ENCODE measurements at regions of chr20 and their contacts with region 1.

Region 1: GRCh38 chr20:3767427-3768341 is at the start of gene ADISSP:
- DNase-seq: peak; percentile 91
- ATAC-seq: peak; percentile 97
- H3K4me3 ChIP-seq: peak within 1 kb of the TSS; percentile 89
- H3K27ac ChIP-seq: peak within 1 kb of the TSS; percentile 75
- H3K4me1 ChIP-seq: peaks cover 24% of the 10 kb centered on the region
- H3K27me3 ChIP-seq: no peaks in the 10 kb centered on the region
- CTCF ChIP-seq: peak in 2 of 3 experiments; percentile 14 to 23; a peak in 2 of 6 replicates
- EP300 ChIP-seq: no peak
- POLR2A ChIP-seq: peak; percentile 84
- RAD21 ChIP-seq: no peak
- polyA plus RNA-seq, gene ADISSP: 0.80 to 7.6 TPM

Region 2: GRCh38 chr20:3616250-3616649 is 151.4 kb before region 1 on chr20:
- CTCF ChIA-PET with region 1: no interaction called
- POLR2A ChIA-PET with region 1: no interaction called
- RAD21 ChIA-PET with region 1: no interaction called
- SMC1A ChIA-PET with region 1: no interaction called
- in situ Hi-C with region 1: no loop called
- intact Hi-C with region 1: no loop called
- DNase-seq: no peak
- ATAC-seq: no peak
- H3K4me3 ChIP-seq: no peak overlapping the region
- H3K27ac ChIP-seq: no peak overlapping the region
- H3K4me1 ChIP-seq: 0 out of 2 replicates have a peak, but pooled peaks cover 3% of the 10 kb centered on the region
- H3K27me3 ChIP-seq: no peaks in the 10 kb centered on the region
- CTCF ChIP-seq: no peak
- EP300 ChIP-seq: no peak
- POLR2A ChIP-seq: no peak
- RAD21 ChIP-seq: no peak

Region 3: DNA sequence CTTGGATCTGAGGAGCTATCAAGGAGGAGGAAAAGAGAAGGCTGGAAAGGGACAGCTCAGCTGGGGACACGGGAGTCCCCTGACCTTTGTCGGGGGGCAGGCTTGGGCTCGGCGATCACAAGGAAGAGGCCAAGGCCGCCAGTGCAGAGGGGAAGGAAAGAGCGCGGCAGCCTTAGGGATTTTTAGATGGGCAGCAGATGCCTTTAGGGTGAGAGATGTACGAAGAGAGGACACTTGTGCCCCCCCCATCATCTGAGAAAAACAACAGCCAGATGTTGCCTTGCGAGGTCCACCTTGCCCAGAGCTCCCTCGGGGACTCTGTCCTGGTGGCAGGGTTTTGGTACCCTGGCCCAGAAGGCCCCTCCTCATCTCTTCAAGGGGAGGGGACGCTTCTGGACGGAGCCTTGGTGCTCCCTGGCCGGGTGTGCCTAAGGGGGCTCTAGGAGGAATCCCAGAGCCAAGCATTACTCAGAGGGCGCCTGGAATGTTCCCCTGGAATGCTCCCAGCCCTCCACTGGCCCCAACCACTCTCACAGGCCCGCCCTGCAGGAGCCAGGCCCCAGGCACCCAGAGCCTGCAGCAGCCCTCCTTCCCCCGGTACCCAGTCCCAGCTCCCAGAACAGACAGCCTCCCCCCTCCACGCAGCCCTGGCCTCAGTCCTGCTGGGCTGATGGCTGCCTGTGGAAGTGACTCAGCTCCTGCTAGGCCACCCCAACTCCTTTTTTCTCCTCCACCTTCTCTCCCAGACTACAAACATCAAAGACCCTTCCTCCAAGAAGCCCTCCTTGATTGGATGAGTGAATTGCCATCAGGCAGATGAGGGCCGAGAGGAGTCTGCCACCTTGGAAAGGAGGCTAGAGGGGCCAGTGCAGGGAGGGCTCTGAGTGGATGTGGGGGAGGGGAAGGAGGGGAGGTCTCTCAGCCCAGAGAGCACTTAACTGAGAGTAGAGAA is 87.7 kb before region 1 on chr20:
- CTCF ChIA-PET with region 1: interaction called, 24 read pairs
- POLR2A ChIA-PET with region 1: no interaction called
- RAD21 ChIA-PET with region 1: interaction called, 7 read pairs
- SMC1A ChIA-PET with region 1: interaction called, 4 read pairs
- in situ Hi-C with region 1: no loop called
- intact Hi-C with region 1: loop called (anchors 5 kb)
- DNase-seq: no peak
- ATAC-seq: no peak
- H3K4me3 ChIP-seq: no peak overlapping the region
- H3K27ac ChIP-seq: no peak overlapping the region
- H3K4me1 ChIP-seq: no peaks in the 10 kb centered on the region; the same call in 1 of the 2 replicates
- H3K27me3 ChIP-seq: peaks cover 3% of the 10 kb centered on the region in 2 experiments; a peak in 2 of 4 replicates
- CTCF ChIP-seq: no peak
- EP300 ChIP-seq: no peak
- POLR2A ChIP-seq: no peak
- RAD21 ChIP-seq: no peak

Region 4: DNA sequence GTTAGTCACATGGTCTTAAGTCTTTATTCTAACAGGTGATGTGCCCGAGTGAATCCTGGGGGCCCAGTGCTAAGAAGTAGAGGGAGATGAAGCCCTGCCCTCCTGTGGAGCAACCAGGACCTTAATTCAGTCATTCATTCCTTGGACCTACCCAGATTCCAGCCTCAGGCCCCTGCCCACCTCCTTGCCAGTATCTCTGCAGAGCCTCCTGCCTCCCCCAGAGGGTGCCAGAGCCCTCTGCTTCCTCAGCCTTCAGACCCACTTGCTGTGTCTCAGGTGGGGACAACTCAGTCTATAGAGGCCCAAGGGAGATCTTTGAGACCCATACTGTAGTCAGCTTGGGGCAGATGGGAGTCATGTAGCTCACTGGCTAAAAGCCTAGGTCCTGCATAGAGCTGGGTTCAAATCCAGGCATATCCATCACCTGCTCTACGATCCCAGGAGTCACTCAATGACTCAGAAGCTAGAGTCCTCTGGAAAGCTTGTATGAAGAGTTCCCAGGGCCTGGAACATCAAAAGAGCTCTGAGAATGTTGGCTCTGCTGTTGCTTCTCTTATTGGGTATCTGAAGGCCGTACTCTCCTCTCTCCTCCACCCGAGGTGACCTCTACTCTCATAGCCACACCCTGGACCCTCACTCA is 51.4 kb before region 1 on chr20:
- CTCF ChIA-PET with region 1: interaction called, 19 read pairs
- POLR2A ChIA-PET with region 1: no interaction called
- RAD21 ChIA-PET with region 1: interaction called, 3 read pairs
- SMC1A ChIA-PET with region 1: interaction called, 6 read pairs
- in situ Hi-C with region 1: no loop called
- intact Hi-C with region 1: loop called (anchors 5 kb)
- DNase-seq: no peak
- ATAC-seq: peak; percentile 93
- H3K4me3 ChIP-seq: no peak overlapping the region
- H3K27ac ChIP-seq: no peak overlapping the region
- H3K4me1 ChIP-seq: peaks cover 16% of the 10 kb centered on the region
- H3K27me3 ChIP-seq: no peaks in the 10 kb centered on the region
- CTCF ChIP-seq: peak; percentile 76 to 86 (median 85)
- EP300 ChIP-seq: no peak
- POLR2A ChIP-seq: no peak
- RAD21 ChIP-seq: peak; percentile 85

Region 5: DNA sequence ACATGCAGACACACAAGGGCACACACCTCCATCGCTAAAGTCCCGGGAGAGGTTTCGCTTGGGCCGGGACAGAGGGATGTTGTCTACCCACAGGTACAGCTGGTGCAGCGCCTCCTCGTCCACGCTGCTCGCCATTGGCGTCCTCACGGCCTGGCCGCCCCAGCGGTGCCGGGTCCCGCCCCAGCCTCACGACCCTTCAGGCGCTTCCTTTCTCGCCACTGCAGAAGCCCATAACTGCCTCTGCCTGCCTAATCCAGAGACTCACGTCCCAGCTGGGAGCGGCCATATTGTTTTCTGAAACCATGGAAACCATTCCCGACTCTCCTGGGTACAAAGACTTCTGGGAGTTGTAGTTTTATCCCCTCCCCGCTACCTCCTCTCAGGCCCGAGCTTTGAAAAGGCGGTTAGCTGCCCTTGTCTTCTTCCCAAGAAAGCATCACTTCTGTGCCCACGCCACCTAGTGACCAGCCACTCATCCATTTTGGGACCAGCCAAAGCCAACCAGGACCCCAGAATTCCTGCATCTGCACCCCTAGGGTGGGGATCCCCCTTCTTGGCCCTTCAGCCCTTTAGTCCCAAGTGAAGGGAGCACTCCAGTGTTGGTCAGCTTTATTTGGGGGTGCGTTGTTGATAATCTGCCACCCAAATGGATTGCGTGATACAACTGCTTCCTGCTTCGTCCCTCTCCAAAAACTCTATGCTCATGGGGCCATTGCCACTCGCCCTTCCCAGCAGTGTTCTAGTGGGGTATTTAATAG is 13.6 kb after region 1 on chr20 and contains the start of gene SPEF1:
- CTCF ChIA-PET with region 1: interaction called, 26 read pairs
- POLR2A ChIA-PET with region 1: interaction called, 4 read pairs
- RAD21 ChIA-PET with region 1: interaction called, 5 read pairs
- SMC1A ChIA-PET with region 1: interaction called, 3 read pairs
- in situ Hi-C with region 1: no loop called
- intact Hi-C with region 1: no loop called
- DNase-seq: peak; percentile 33
- ATAC-seq: peak; percentile 84
- H3K4me3 ChIP-seq: 0 out of 2 replicates have a peak within 1 kb of the TSS, but pooled peaks have one; percentile 46
- H3K27ac ChIP-seq: no peak within 1 kb of the TSS
- H3K4me1 ChIP-seq: peaks cover 25% of the 10 kb centered on the region
- H3K27me3 ChIP-seq: peaks cover 12 to 16% of the 10 kb centered on the region in 2 experiments
- CTCF ChIP-seq: peak in 2 of 3 experiments; percentile 18 to 33; a peak in 2 of 6 replicates
- EP300 ChIP-seq: no peak
- POLR2A ChIP-seq: peak; percentile 32; the same call in 1 of the 2 replicates
- RAD21 ChIP-seq: no peak
- polyA plus RNA-seq, gene SPEF1: not detected

Region 6: GRCh38 chr20:4102381-4102780 is 334.7 kb after region 1 on chr20:
- CTCF ChIA-PET with region 1: no interaction called
- POLR2A ChIA-PET with region 1: interaction called, 10 read pairs
- RAD21 ChIA-PET with region 1: no interaction called
- SMC1A ChIA-PET with region 1: no interaction called
- in situ Hi-C with region 1: no loop called
- intact Hi-C with region 1: no loop called
- DNase-seq: no peak
- ATAC-seq: no peak
- H3K4me3 ChIP-seq: no peak overlapping the region
- H3K27ac ChIP-seq: no peak overlapping the region
- H3K4me1 ChIP-seq: no peaks in the 10 kb centered on the region
- H3K27me3 ChIP-seq: peaks cover 0 to 2% of the 10 kb centered on the region in 2 experiments; a peak in 2 of 4 replicates
- CTCF ChIP-seq: no peak
- EP300 ChIP-seq: no peak
- POLR2A ChIP-seq: no peak
- RAD21 ChIP-seq: no peak

Measured in GM12878 (cell line).